Activated CD4-positive, alpha-beta T cell treated with anti-CD3 and anti-CD28 coated beads for 36 hours (primary cell): ENCODE measurements at regions of chr15 and their contacts with region 1.

Region 1: GRCh38 chr15:76905013-76905839 is at the start of gene SCAPER:
- DNase-seq: peak; percentile 96
- ATAC-seq: peak; percentile 92
- H3K4me3 Mint-ChIP-seq: peak within 1 kb of the TSS; percentile 87
- H3K27ac Mint-ChIP-seq: peak within 1 kb of the TSS; percentile 92
- H3K4me1 Mint-ChIP-seq: peaks cover 34% of the 10 kb centered on the region
- H3K27me3 Mint-ChIP-seq: no peaks in the 10 kb centered on the region
- total RNA-seq, gene SCAPER: 25.9 to 35.2 TPM

Region 2: DNA sequence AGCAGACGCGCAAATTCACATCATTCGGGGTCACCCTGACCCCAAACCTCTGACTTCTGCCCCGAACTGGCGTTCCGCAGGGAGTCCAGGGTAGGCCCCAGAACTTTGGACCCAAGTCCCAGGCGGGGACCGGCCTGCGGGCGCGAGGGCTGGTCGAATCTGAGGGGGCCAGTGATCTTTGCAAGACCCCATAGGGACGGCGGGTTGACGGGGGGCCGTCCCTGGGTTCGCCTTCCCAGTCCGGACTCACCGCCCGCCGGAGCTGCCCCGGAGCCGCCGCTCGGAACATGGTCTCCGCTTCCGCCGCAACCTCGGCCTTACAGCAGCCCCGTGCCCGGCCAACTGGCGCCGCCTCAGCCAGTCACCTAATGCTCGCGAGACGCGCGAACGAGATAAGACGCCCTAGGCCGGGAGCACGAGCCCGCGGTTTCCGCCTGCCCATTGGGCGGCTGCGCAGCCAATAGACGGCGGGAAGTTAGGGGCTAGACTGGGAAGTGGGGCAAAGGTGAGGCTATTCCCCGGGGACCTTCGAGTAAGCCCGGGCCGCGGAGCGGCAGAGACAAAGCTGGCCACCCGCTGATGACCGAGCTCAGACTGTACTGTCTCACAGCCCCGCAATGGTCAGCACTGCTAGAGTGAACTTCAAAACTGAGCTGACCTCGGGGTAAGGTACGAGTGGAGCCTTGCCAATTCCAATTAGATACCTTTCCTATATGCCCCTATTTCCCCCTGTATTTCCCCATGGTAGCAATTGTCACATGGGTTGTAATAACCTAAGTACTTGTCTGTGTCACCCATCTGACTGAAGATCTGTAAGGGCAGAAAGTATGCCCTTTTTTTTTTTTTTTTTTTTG is 593.9 kb before region 1 on chr15 and contains the start of gene ETFA:
- CTCF ChIA-PET with region 1: no interaction called
- POLR2A ChIA-PET with region 1: no interaction called
- intact Hi-C with region 1: loop called in 1 of 2 experiments (anchors 2 kb)
- DNase-seq: peak; percentile 95
- ATAC-seq: peak; percentile 98
- H3K4me3 Mint-ChIP-seq: peak within 1 kb of the TSS; percentile 87
- H3K27ac Mint-ChIP-seq: peak within 1 kb of the TSS; percentile 69
- H3K4me1 Mint-ChIP-seq: peaks cover 28% of the 10 kb centered on the region
- H3K27me3 Mint-ChIP-seq: no peaks in the 10 kb centered on the region
- total RNA-seq, gene ETFA: 100 to 136 TPM

Region 3: GRCh38 chr15:76336254-76337058 is 568.8 kb before region 1 on chr15 and contains the start of gene ISL2:
- CTCF ChIA-PET with region 1: no interaction called
- POLR2A ChIA-PET with region 1: no interaction called
- intact Hi-C with region 1: loop called in 1 of 2 experiments (anchors 2 kb)
- DNase-seq: peak; percentile 88
- ATAC-seq: peak; percentile 47
- H3K4me3 Mint-ChIP-seq: peak within 1 kb of the TSS; percentile 67
- H3K27ac Mint-ChIP-seq: peak within 1 kb of the TSS; percentile 59
- H3K4me1 Mint-ChIP-seq: peaks cover 45% of the 10 kb centered on the region
- H3K27me3 Mint-ChIP-seq: peaks cover 61% of the 10 kb centered on the region
- total RNA-seq, gene ISL2: 0.25 TPM in 1 of 2 experiments, not detected in the other

Region 4: GRCh38 chr15:76756381-76756780 is 148.8 kb before region 1 on chr15:
- CTCF ChIA-PET with region 1: no interaction called
- POLR2A ChIA-PET with region 1: no interaction called
- intact Hi-C with region 1: no loop called
- DNase-seq: no peak
- ATAC-seq: no peak
- H3K4me3 Mint-ChIP-seq: no peak overlapping the region
- H3K27ac Mint-ChIP-seq: no peak overlapping the region
- H3K4me1 Mint-ChIP-seq: peaks cover 14% of the 10 kb centered on the region
- H3K27me3 Mint-ChIP-seq: no peaks in the 10 kb centered on the region

Region 5: GRCh38 chr15:76931397-76932007 is 26.3 kb after region 1 on chr15 and contains the start of gene RCN2:
- CTCF ChIA-PET with region 1: interaction called, 3 read pairs
- POLR2A ChIA-PET with region 1: interaction called, 4 read pairs
- intact Hi-C with region 1: loop called (anchors 1 kb)
- DNase-seq: peak; percentile 96
- ATAC-seq: peak; percentile 99
- H3K4me3 Mint-ChIP-seq: peak within 1 kb of the TSS; percentile 81
- H3K27ac Mint-ChIP-seq: peak within 1 kb of the TSS; percentile 85
- H3K4me1 Mint-ChIP-seq: peaks cover 31% of the 10 kb centered on the region
- H3K27me3 Mint-ChIP-seq: no peaks in the 10 kb centered on the region
- total RNA-seq, gene RCN2: 16.6 to 18.9 TPM

Region 6: DNA sequence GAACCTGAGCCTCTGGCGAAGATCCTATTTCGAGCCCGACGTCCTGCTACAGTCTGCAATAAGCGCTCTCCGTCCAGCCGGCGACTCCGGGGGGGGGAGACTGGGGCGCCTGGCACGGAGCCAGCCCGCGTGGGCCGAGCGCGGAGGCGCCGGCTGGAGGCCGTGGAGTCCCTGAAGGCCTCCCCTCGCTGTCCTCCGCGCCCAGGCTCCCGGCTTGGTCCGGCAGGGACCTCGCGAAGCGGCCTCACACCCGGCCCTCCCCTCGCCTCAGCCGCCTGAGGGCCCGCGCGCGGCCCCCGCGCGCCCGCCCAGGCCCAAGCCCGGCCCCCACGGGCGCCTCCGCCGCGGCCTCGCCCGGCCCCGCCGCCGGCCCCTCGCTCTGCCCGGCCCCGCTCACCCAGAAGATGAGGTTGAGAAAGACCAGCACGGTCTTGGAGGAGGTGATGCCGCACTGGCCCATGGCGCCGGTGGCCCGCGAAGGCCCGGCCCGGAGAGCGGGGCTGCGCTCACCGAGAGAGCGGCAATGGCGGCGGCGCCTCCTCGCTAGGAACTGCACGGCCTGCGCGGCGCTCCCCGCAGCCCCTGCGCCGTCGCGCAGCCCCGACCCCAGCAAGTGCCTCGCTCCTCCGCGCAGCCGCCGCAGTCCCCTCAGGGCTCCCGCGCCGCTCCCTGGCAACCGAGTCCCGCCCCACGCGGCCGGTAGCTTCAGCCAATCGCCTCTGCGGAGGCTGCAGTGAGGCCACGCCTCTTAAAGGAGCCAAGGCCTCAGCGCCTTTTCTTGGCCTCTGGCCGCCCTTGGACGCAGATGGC is 165.5 kb after region 1 on chr15 and contains the start of gene TSPAN3:
- CTCF ChIA-PET with region 1: no interaction called
- POLR2A ChIA-PET with region 1: no interaction called
- intact Hi-C with region 1: loop called in 1 of 2 experiments (anchors 1 kb)
- DNase-seq: peak; percentile 95
- ATAC-seq: peak; percentile 99
- H3K4me3 Mint-ChIP-seq: peak within 1 kb of the TSS; percentile 75
- H3K27ac Mint-ChIP-seq: peak within 1 kb of the TSS; percentile 65
- H3K4me1 Mint-ChIP-seq: peaks cover 29% of the 10 kb centered on the region
- H3K27me3 Mint-ChIP-seq: no peaks in the 10 kb centered on the region
- total RNA-seq, gene TSPAN3: 26.2 to 28.4 TPM